ENCODE measurements at regions of chr17 and their contacts with region 1.

Region 1: GRCh38 chr17:44968226-44969143 is at the start of gene C1QL1:
- DNase-seq: peak; percentile 45 to 94
- H3K4me3 ChIP-seq: peak within 1 kb of the TSS; percentile 27 to 53
- H3K27ac ChIP-seq: no peak within 1 kb of the TSS
- H3K4me1 ChIP-seq: peaks cover 10 to 15% of the 10 kb centered on the region in 2 donors
- H3K27me3 ChIP-seq: peaks cover 9% of the 10 kb centered on the region
- CTCF ChIP-seq: no peak
- total RNA-seq, gene C1QL1: not detected

Region 2: DNA sequence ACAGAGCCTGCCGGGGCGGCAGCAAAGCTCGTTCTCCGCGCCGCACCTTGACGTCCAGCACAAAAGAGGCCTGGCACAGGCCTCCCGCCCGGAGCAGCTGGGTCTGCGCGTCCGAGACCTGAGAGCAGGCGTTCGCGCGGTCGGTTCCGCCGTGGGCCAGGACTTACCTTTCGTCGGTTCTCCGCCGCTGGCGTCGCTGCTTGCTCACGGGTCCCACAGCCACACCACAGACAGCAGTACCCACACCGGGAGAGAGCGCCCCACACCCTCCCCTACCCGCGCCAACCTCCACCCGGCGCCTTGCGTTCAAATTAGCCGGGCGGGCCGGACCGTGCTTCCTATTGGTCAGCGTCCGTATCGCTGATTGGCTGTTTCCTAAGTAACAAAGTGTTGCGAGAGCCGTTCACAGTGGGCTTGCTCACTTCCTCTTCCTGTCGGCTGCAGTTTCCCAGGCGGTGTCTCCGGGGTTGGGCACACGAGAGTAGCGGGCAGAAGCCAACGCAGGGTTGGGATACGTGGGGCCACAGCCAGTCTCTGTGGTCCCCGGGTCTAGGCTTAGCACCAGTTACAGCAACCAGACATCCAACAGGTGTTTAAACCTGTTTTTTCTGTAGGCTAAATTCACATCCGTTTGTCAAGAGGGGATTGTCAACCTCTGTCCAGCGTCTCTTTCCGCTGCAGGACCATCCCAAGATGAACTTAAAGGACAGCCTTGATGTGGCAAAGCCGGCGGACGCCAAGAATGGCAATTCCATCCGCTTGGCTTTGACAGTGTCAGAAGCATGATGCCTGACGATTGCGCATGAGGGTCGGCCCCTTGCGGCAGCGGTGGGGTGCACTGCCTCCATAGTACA is 20.8 kb before region 1 on chr17 and contains the start of gene KIF18B:
- intact Hi-C with region 1: loop called (anchors 1 kb)
- DNase-seq: peak; percentile 59 to 94
- H3K4me3 ChIP-seq: peak within 1 kb of the TSS; percentile 66 to 74
- H3K27ac ChIP-seq: no peak within 1 kb of the TSS
- H3K4me1 ChIP-seq: peaks cover 6 to 8% of the 10 kb centered on the region in 2 donors
- H3K27me3 ChIP-seq: no peaks in the 10 kb centered on the region
- CTCF ChIP-seq: no peak
- total RNA-seq, gene KIF18B: not detected

Measured in ascending aorta (tissue), 2 donors.